Activated CD4-positive, alpha-beta memory T cell treated with anti-CD3 and anti-CD28 coated beads for 36 hours (primary cell): ENCODE measurements at regions of chr20 and their contacts with region 1.

Region 1: GRCh38 chr20:10603971-10604864 is 69.6 kb downstream of the JAG1 start:
- DNase-seq: no peak
- H3K4me3 Mint-ChIP-seq: no peak overlapping the region
- H3K27ac Mint-ChIP-seq: no peak overlapping the region
- H3K4me1 Mint-ChIP-seq: peaks cover 11% of the 10 kb centered on the region
- H3K27me3 Mint-ChIP-seq: no peaks in the 10 kb centered on the region

Region 2: GRCh38 chr20:10350188-10350842 is 253.9 kb before region 1 on chr20:
- CTCF ChIA-PET with region 1: no interaction called
- POLR2A ChIA-PET with region 1: no interaction called
- intact Hi-C with region 1: loop called (anchors 2 kb)
- DNase-seq: no peak
- H3K4me3 Mint-ChIP-seq: no peak overlapping the region
- H3K27ac Mint-ChIP-seq: peak overlapping the region; percentile 75
- H3K4me1 Mint-ChIP-seq: peaks cover 30% of the 10 kb centered on the region
- H3K27me3 Mint-ChIP-seq: no peaks in the 10 kb centered on the region

Region 3: GRCh38 chr20:10519361-10520046 is 84.7 kb before region 1 on chr20:
- CTCF ChIA-PET with region 1: no interaction called
- POLR2A ChIA-PET with region 1: no interaction called
- intact Hi-C with region 1: loop called (anchors 1 kb)
- DNase-seq: no peak
- H3K4me3 Mint-ChIP-seq: no peak overlapping the region
- H3K27ac Mint-ChIP-seq: no peak overlapping the region
- H3K4me1 Mint-ChIP-seq: peaks cover 32% of the 10 kb centered on the region
- H3K27me3 Mint-ChIP-seq: no peaks in the 10 kb centered on the region

Region 4: DNA sequence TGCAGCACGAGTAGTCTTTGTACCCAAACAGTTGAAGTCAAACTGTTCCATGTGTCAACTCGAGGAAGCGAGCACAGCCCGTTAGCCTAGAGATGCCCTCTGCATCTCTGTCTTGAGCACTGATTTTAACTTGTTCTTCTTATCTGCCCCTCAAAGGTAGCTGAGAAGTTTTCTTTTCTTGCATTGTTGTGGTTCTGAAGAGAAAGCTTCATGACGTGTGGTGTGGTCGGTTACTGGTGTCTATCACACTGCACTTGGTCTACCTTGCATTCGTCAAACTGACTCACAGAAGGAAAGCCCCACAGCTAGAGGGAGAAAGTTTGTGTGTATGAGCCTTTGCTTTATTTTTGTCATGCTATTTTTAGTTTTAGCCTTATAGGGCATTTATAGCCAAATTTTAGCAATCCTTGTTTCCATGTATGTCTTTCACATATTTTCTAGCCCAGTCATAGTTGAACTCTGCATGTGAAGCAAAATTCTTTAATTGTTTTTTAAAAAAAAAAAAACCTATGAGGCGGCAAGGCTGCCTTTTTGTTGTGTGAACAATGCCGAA is 45.5 kb before region 1 on chr20:
- CTCF ChIA-PET with region 1: no interaction called
- POLR2A ChIA-PET with region 1: no interaction called
- intact Hi-C with region 1: loop called (anchors 1 kb)
- DNase-seq: peak; percentile 63
- H3K4me3 Mint-ChIP-seq: no peak overlapping the region
- H3K27ac Mint-ChIP-seq: no peak overlapping the region
- H3K4me1 Mint-ChIP-seq: peaks cover 9% of the 10 kb centered on the region
- H3K27me3 Mint-ChIP-seq: no peaks in the 10 kb centered on the region